Activated CD4-positive, alpha-beta memory T cell treated with anti-CD3 and anti-CD28 coated beads for 36 hours (primary cell): ENCODE measurements at regions of chr10 and their contacts with region 1.

Region 1: GRCh38 chr10:17001961-17002749 is 127.5 kb downstream of the CUBN start:
- DNase-seq: peak; percentile 43
- H3K4me3 Mint-ChIP-seq: no peak overlapping the region
- H3K27ac Mint-ChIP-seq: peak overlapping the region; percentile 63
- H3K4me1 Mint-ChIP-seq: peaks cover 43% of the 10 kb centered on the region
- H3K27me3 Mint-ChIP-seq: peaks cover 13% of the 10 kb centered on the region

Region 2: DNA sequence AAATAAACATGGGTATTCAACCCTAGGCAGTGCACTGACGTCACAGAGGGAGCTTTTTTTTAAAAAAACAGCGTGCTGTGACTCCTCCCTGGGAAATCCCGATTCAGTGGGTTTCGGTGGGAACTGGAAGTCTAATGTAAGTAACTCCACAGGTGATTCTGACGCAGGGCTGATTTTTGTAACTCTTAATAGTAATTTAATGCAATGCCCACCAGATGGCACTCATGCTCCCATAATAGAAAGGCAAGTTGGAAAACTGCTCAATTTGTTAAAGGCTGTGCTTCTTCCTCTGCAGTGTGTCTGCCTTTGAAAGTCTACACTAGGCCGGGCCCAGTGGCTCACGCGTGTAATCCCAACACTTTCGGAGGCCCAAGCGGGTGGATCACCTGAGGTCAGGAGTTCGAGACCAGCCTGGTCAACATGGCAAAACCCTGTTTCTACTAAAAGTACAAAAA is 174.0 kb before region 1 on chr10:
- CTCF ChIA-PET with region 1: no interaction called
- POLR2A ChIA-PET with region 1: no interaction called
- intact Hi-C with region 1: no loop called
- DNase-seq: peak; percentile 61
- H3K4me3 Mint-ChIP-seq: no peak overlapping the region
- H3K27ac Mint-ChIP-seq: no peak overlapping the region
- H3K4me1 Mint-ChIP-seq: no peaks in the 10 kb centered on the region
- H3K27me3 Mint-ChIP-seq: no peaks in the 10 kb centered on the region

Region 3: DNA sequence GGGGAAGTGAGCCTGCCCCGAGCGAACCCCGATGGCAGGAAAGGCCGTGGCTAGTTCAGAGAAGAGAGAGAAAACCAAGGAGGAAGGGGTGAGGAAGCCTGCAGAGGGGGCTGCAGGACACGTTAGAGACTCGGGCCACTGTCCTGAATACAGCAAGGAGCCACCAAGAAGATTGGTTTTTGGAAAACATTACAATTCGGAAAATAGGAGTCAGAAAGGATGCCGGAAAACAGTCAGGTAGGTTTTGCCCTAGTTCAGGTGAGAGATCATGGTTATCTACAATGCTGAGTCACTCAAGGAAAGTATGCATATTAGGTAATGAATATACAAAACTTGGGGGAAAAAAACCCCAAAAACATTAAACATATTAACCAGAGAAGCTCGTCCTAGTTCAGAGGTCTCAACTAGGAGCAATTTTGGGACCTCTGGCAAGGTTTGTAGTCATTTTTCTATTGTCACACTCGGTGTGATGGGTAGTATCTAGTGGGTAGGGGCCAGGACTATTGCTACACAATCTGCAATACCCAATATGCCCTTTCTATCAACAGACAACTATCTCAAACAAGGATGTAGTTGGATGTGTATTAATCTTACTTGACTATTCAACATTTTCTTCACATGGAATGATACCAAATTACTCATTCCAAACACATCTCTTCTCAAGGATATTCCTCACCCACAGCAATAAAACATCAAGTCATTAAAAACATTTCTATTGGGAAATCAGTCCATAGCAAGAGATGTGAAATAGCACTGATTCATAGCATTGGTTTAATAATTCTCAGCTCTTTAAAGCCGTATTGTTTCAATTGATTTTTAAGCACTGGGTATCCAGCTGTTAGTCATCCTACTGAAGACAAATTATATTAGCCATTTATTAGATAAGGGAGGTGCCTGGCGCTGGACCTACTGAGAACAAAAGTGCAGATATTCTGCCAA is 110.5 kb before region 1 on chr10:
- CTCF ChIA-PET with region 1: no interaction called
- POLR2A ChIA-PET with region 1: interaction called, 3 read pairs
- intact Hi-C with region 1: loop called (anchors 1 kb)
- DNase-seq: peak; percentile 69
- H3K4me3 Mint-ChIP-seq: peak overlapping the region; percentile 65
- H3K27ac Mint-ChIP-seq: peak overlapping the region; percentile 63
- H3K4me1 Mint-ChIP-seq: peaks cover 11% of the 10 kb centered on the region
- H3K27me3 Mint-ChIP-seq: no peaks in the 10 kb centered on the region

Region 4: GRCh38 chr10:16965740-16966447 is 36.3 kb before region 1 on chr10:
- CTCF ChIA-PET with region 1: no interaction called
- POLR2A ChIA-PET with region 1: no interaction called
- intact Hi-C with region 1: loop called (anchors 2 kb)
- DNase-seq: no peak
- H3K4me3 Mint-ChIP-seq: no peak overlapping the region
- H3K27ac Mint-ChIP-seq: no peak overlapping the region
- H3K4me1 Mint-ChIP-seq: peaks cover 17% of the 10 kb centered on the region
- H3K27me3 Mint-ChIP-seq: no peaks in the 10 kb centered on the region

Region 5: GRCh38 chr10:17075533-17076359 is 73.6 kb after region 1 on chr10:
- CTCF ChIA-PET with region 1: no interaction called
- POLR2A ChIA-PET with region 1: no interaction called
- intact Hi-C with region 1: loop called (anchors 5 kb)
- DNase-seq: no peak
- H3K4me3 Mint-ChIP-seq: no peak overlapping the region
- H3K27ac Mint-ChIP-seq: no peak overlapping the region
- H3K4me1 Mint-ChIP-seq: peaks cover 18% of the 10 kb centered on the region
- H3K27me3 Mint-ChIP-seq: no peaks in the 10 kb centered on the region

Region 6: DNA sequence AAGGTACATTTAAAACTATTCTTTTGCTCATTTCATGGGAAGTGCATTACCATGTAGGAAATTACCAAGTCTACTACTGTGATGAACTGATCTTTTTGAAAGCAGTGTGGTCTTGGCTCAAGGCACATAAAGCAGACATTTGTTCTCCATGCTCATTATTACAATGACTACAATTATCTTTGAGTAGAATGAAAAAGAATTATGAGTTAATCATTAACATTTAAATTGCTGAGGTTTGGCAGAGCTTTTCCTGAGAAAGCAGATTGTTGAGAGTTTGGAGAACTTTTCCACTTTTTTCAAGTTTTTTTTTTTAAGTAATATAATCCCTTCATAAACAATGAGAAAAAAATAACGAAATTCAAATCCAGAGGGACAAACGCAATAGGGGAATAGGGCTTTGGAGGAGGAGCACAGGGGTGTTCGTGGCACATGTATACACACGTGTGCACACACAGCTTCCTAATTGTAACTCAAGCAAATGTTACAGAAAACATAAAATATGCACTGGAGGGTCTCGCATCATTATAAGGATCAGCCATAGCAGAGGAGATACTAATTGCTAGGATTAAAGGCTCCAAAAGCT is 136.4 kb after region 1 on chr10:
- CTCF ChIA-PET with region 1: no interaction called
- POLR2A ChIA-PET with region 1: no interaction called
- intact Hi-C with region 1: no loop called
- DNase-seq: no peak
- H3K4me3 Mint-ChIP-seq: no peak overlapping the region
- H3K27ac Mint-ChIP-seq: no peak overlapping the region
- H3K4me1 Mint-ChIP-seq: peaks cover 8% of the 10 kb centered on the region
- H3K27me3 Mint-ChIP-seq: no peaks in the 10 kb centered on the region

Region 7: GRCh38 chr10:17278607-17279240 is 276.6 kb after region 1 on chr10:
- CTCF ChIA-PET with region 1: no interaction called
- POLR2A ChIA-PET with region 1: no interaction called
- intact Hi-C with region 1: no loop called
- DNase-seq: no peak
- H3K4me3 Mint-ChIP-seq: no peak overlapping the region
- H3K27ac Mint-ChIP-seq: no peak overlapping the region
- H3K4me1 Mint-ChIP-seq: peaks cover 2% of the 10 kb centered on the region
- H3K27me3 Mint-ChIP-seq: peaks cover 7% of the 10 kb centered on the region

Region 8: GRCh38 chr10:17512341-17513001 is 510.3 kb after region 1 on chr10:
- CTCF ChIA-PET with region 1: no interaction called
- POLR2A ChIA-PET with region 1: no interaction called
- intact Hi-C with region 1: loop called (anchors 5 kb)
- DNase-seq: no peak
- H3K4me3 Mint-ChIP-seq: no peak overlapping the region
- H3K27ac Mint-ChIP-seq: peak overlapping the region; percentile 64
- H3K4me1 Mint-ChIP-seq: peaks cover 35% of the 10 kb centered on the region
- H3K27me3 Mint-ChIP-seq: no peaks in the 10 kb centered on the region